Endothelial cell of umbilical vein (primary cell): ENCODE measurements at regions of chr12 and their contacts with region 1.

Region 1: DNA sequence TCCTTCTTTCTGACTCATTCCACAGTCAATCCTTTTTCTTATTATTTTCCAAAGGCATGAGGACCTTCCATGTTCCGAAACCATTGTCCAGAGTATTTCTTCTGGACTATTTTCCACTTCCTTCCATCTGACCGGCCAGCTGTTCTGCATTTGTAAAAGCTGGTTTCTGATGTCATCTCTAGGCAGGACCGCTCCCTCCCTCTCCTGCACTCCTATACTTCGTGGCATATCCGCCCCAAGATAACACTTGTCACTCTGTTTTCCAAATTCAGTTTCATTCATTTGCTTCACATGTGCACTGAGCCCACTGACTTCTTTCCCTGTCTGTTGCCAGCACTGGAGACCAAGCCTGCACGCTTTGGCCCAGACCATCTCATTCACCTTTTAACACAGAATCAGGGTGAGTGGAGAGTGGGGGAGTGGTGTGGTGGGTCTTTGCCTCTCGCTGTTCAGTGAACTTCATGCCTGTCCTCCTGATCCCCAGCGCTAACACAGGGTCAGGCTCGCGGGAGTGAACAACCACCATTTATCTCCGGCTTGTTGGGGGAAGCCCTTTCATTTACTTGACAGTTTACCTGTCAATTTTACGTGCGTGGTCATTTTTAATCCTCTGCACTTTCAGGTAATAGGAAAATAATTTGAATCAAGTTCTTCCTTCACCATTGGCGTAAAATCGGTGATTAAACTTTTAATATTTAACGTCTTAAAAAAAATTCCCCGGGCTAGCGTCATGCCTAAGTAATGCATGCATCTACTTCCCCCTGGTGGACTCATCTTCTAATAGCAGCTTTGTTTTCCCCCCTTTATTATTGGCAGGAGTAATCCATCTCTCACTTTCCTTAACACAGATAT is 52.5 kb downstream of the C12orf75 start:
- DNase-seq: peak; percentile 84
- H3K4me3 ChIP-seq: peak overlapping the region; percentile 24 to 62 (median 34)
- H3K27ac ChIP-seq: peak overlapping the region; percentile 73
- H3K4me1 ChIP-seq: peaks cover 13% of the 10 kb centered on the region
- H3K27me3 ChIP-seq: no peaks in the 10 kb centered on the region
- CTCF ChIP-seq: peak; percentile 43 to 65
- POLR2A ChIP-seq: no peak

Region 2: DNA sequence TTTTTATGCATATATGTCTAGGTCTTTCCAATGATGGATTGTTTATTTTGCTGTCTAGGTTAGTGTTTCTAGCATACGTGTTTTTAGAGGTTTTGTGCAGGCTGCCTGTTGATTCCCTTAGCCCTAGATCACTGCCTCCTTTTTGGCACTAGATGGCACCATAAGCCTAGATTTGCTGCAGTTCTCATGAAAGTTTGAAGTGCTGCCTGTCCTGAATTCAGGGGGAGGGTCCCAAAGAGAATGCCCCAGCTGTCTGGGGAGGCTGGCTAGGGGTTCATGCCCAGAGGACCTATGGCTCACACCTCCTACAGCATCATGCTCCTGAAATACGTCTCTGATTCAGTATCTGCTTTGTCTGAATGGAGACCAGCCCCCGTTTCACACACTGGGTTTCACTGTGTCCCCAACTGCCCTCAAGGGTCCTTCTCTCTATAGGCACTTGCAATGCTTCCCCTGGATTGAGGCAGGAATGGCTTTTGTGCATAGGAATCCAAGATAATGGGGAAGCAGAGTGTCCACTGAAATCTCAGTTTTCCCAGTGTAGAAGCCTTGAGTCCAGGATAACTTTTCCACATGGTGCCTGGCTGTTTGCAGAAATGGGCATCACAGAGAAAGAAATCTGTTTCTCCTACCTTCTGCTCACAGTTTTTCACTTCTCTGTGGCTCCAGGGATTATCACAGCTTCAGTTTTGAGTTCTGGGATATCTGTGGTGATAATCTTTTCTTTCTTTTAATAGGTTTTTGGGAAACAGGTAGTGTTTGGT is 1181.6 kb before region 1 on chr12:
- CTCF ChIA-PET with region 1: no interaction called
- POLR2A ChIA-PET with region 1: no interaction called
- dilution Hi-C with region 1: no loop called
- intact Hi-C with region 1: loop called (anchors 10 kb)
- DNase-seq: peak; percentile 74
- H3K4me3 ChIP-seq: no peak overlapping the region
- H3K27ac ChIP-seq: no peak overlapping the region
- H3K4me1 ChIP-seq: no peaks in the 10 kb centered on the region
- H3K27me3 ChIP-seq: peaks cover 0 to 3% of the 10 kb centered on the region in 2 experiments
- CTCF ChIP-seq: peak; percentile 79 to 83
- POLR2A ChIP-seq: no peak

Region 3: DNA sequence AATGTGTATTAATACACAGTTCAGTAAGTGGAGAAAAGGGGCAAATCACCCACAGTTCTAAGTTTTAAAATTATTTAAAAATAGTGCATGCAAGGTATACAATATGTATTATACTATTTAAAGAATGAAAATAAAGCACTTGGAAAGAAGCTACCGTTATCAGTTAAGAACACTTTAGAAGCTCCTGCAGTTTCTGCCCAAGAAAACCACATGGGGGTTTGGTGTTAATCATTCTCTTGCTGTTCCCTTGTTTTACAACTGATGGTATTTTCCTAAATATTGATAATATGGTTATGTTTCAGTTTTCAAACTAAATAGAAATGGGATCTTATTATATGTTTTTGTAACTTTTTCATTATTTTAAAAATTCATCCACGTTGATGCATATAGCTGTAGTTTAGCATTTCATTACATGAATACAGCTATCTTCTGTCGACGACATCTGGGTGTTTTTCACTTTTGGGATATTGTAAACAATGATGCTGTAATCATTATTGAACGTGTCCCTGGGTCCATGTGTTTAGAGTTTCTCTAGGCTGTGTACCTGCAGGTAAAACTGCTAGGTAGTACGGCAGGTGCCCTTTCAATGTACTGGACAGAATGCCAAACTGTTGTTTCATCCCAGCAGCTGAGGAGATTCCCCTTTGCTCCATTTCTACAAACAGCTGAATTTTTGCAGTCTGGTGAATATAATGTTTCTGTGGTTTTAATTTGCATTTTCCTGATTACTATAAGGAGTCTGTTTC is 211.1 kb before region 1 on chr12:
- CTCF ChIA-PET with region 1: interaction called, 22 read pairs
- POLR2A ChIA-PET with region 1: no interaction called
- dilution Hi-C with region 1: no loop called
- intact Hi-C with region 1: no loop called
- DNase-seq: no peak
- H3K4me3 ChIP-seq: no peak overlapping the region
- H3K27ac ChIP-seq: no peak overlapping the region
- H3K4me1 ChIP-seq: no peaks in the 10 kb centered on the region
- H3K27me3 ChIP-seq: no peaks in the 10 kb centered on the region
- CTCF ChIP-seq: no peak
- POLR2A ChIP-seq: no peak

Region 4: GRCh38 chr12:105204916-105205315 is 178.1 kb before region 1 on chr12:
- CTCF ChIA-PET with region 1: interaction called, 26 read pairs
- POLR2A ChIA-PET with region 1: no interaction called
- dilution Hi-C with region 1: no loop called
- intact Hi-C with region 1: loop called (anchors 2 kb)
- DNase-seq: peak; percentile 58
- H3K4me3 ChIP-seq: no peak overlapping the region
- H3K27ac ChIP-seq: no peak overlapping the region
- H3K4me1 ChIP-seq: no peaks in the 10 kb centered on the region
- H3K27me3 ChIP-seq: no peaks in the 10 kb centered on the region
- CTCF ChIP-seq: no peak
- POLR2A ChIP-seq: no peak

Region 5: GRCh38 chr12:105226219-105226618 is 156.8 kb before region 1 on chr12:
- CTCF ChIA-PET with region 1: interaction called, 12 read pairs
- POLR2A ChIA-PET with region 1: no interaction called
- dilution Hi-C with region 1: no loop called
- intact Hi-C with region 1: loop called (anchors 2 kb)
- DNase-seq: peak; percentile 90
- H3K4me3 ChIP-seq: no peak overlapping the region
- H3K27ac ChIP-seq: peak overlapping the region; percentile 25
- H3K4me1 ChIP-seq: peaks cover 39% of the 10 kb centered on the region
- H3K27me3 ChIP-seq: no peaks in the 10 kb centered on the region
- CTCF ChIP-seq: no peak
- POLR2A ChIP-seq: no peak

Region 6: GRCh38 chr12:105279460-105280056 is 103.4 kb before region 1 on chr12:
- CTCF ChIA-PET with region 1: interaction called, 7 read pairs
- POLR2A ChIA-PET with region 1: no interaction called
- dilution Hi-C with region 1: no loop called
- intact Hi-C with region 1: loop called (anchors 1 kb)
- DNase-seq: peak; percentile 53
- H3K4me3 ChIP-seq: no peak overlapping the region
- H3K27ac ChIP-seq: no peak overlapping the region
- H3K4me1 ChIP-seq: peaks cover 9% of the 10 kb centered on the region
- H3K27me3 ChIP-seq: no peaks in the 10 kb centered on the region
- CTCF ChIP-seq: peak; percentile 60 to 66
- POLR2A ChIP-seq: no peak

Region 7: DNA sequence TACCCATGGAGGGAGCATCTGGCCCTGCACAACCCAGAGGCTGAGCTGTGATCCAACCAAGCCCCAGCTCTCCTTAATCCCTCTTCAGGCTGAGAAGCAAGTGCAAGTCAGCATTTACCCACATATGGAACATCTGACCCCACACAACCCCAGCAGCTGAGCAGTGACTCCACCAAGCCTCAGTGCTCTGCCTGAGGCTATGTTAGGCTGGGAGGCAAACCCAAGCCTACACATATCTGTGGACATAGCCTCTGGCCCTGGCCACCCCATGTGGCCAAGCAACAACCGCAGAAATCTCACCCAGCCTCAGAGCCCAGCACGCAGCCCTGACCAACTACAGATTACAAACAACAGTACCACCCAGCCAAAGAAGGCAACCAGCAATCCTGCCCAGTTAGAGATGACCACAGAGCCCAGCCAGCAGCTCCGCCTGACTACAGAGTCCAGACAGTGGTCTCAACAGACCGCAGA is 613.0 kb after region 1 on chr12:
- CTCF ChIA-PET with region 1: no interaction called
- POLR2A ChIA-PET with region 1: no interaction called
- dilution Hi-C with region 1: no loop called
- intact Hi-C with region 1: no loop called
- DNase-seq: no peak
- H3K4me3 ChIP-seq: no peak overlapping the region
- H3K27ac ChIP-seq: no peak overlapping the region
- H3K4me1 ChIP-seq: no peaks in the 10 kb centered on the region
- H3K27me3 ChIP-seq: peaks cover 0 to 6% of the 10 kb centered on the region in 2 experiments
- CTCF ChIP-seq: no peak
- POLR2A ChIP-seq: no peak

Region 8: GRCh38 chr12:106780010-106780631 is 1397.1 kb after region 1 on chr12:
- CTCF ChIA-PET with region 1: no interaction called
- POLR2A ChIA-PET with region 1: no interaction called
- dilution Hi-C with region 1: no loop called
- intact Hi-C with region 1: no loop called
- DNase-seq: peak; percentile 7
- H3K4me3 ChIP-seq: no peak overlapping the region
- H3K27ac ChIP-seq: no peak overlapping the region
- H3K4me1 ChIP-seq: peaks cover 5% of the 10 kb centered on the region
- H3K27me3 ChIP-seq: no peaks in the 10 kb centered on the region
- CTCF ChIP-seq: no peak
- POLR2A ChIP-seq: no peak